Activated B cell treated with CpG ODN at 0.5 μM for 24 hours (primary cell): ENCODE measurements at regions of chr2 and their contacts with region 1.

Region 1: GRCh38 chr2:19362755-19363473 is 4.5 kb upstream of the OSR1 start:
- DNase-seq: no peak
- ATAC-seq: peak; percentile 45
- H3K4me3 Mint-ChIP-seq: peak overlapping the region; percentile 86
- H3K27ac Mint-ChIP-seq: peak overlapping the region; percentile 64
- H3K4me1 Mint-ChIP-seq: peaks cover 38% of the 10 kb centered on the region
- H3K27me3 Mint-ChIP-seq: peaks cover 22% of the 10 kb centered on the region
- CTCF ChIP-seq: no peak

Region 2: GRCh38 chr2:18387441-18388206 is 975.3 kb before region 1 on chr2:
- CTCF ChIA-PET with region 1: no interaction called
- POLR2A ChIA-PET with region 1: no interaction called
- intact Hi-C with region 1: loop called (anchors 5 kb)
- DNase-seq: peak; percentile 36
- ATAC-seq: peak; percentile 61
- H3K4me3 Mint-ChIP-seq: no peak overlapping the region
- H3K27ac Mint-ChIP-seq: no peak overlapping the region
- H3K4me1 Mint-ChIP-seq: peaks cover 5% of the 10 kb centered on the region
- H3K27me3 Mint-ChIP-seq: peaks cover 8% of the 10 kb centered on the region
- CTCF ChIP-seq: no peak

Region 3: GRCh38 chr2:18560031-18560796 is 802.7 kb before region 1 on chr2 and contains the start of gene RDH14:
- CTCF ChIA-PET with region 1: no interaction called
- POLR2A ChIA-PET with region 1: no interaction called
- intact Hi-C with region 1: loop called (anchors 2 kb)
- DNase-seq: peak; percentile 91
- ATAC-seq: peak; percentile 92
- H3K4me3 Mint-ChIP-seq: peak within 1 kb of the TSS; percentile 92
- H3K27ac Mint-ChIP-seq: peak within 1 kb of the TSS; percentile 91
- H3K4me1 Mint-ChIP-seq: peaks cover 32% of the 10 kb centered on the region
- H3K27me3 Mint-ChIP-seq: no peaks in the 10 kb centered on the region
- CTCF ChIP-seq: no peak
- total RNA-seq, gene RDH14: 18.7 and 19.6 TPM in 2 replicates

Region 4: GRCh38 chr2:18883616-18884456 is 479.1 kb before region 1 on chr2:
- CTCF ChIA-PET with region 1: no interaction called
- POLR2A ChIA-PET with region 1: no interaction called
- intact Hi-C with region 1: loop called (anchors 2 kb)
- DNase-seq: no peak
- ATAC-seq: no peak
- H3K4me3 Mint-ChIP-seq: no peak overlapping the region
- H3K27ac Mint-ChIP-seq: no peak overlapping the region
- H3K4me1 Mint-ChIP-seq: no peaks in the 10 kb centered on the region
- H3K27me3 Mint-ChIP-seq: no peaks in the 10 kb centered on the region
- CTCF ChIP-seq: no peak

Region 5: GRCh38 chr2:19863303-19864041 is 500.6 kb after region 1 on chr2:
- CTCF ChIA-PET with region 1: no interaction called
- POLR2A ChIA-PET with region 1: no interaction called
- intact Hi-C with region 1: loop called (anchors 5 kb)
- DNase-seq: peak; percentile 70
- ATAC-seq: peak; percentile 87
- H3K4me3 Mint-ChIP-seq: no peak overlapping the region
- H3K27ac Mint-ChIP-seq: no peak overlapping the region
- H3K4me1 Mint-ChIP-seq: peaks cover 10% of the 10 kb centered on the region
- H3K27me3 Mint-ChIP-seq: peaks cover 14% of the 10 kb centered on the region
- CTCF ChIP-seq: peak; percentile 82